Activated CD4-positive, alpha-beta memory T cell treated with anti-CD3 and anti-CD28 coated beads for 36 hours (primary cell): ENCODE measurements at regions of chr22 and their contacts with region 1.

Region 1: GRCh38 chr22:26483439-26484359 is at the starts of genes HPS4 and SRRD:
- DNase-seq: peak; percentile 94
- H3K4me3 Mint-ChIP-seq: peak within 1 kb of the TSS; percentile 96
- H3K27ac Mint-ChIP-seq: peak within 1 kb of the TSS; percentile 92
- H3K4me1 Mint-ChIP-seq: peaks cover 65% of the 10 kb centered on the region
- H3K27me3 Mint-ChIP-seq: no peaks in the 10 kb centered on the region
- total RNA-seq, gene HPS4: 41.7 to 44.3 TPM
- total RNA-seq, gene SRRD: 20.6 to 22.0 TPM

Region 2: DNA sequence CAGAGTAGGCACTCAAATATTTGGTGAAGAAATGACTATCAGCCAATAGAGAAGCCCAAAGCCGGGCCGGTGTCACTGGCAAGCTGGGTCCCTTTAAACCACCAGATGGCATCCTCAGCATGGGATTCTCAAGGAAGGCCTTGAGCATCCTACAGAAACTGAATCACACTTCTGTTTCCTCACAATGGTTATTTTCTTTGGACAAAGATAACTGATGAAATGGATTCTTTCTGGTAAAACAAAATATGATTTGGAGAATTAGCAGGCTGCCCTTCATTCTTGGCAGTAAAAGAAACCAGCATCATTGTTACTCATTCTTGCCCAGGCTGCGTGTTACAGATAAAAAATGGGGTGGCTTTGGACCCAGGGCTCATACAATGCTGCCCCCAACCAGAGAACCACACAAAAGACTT is 85.0 kb before region 1 on chr22:
- CTCF ChIA-PET with region 1: interaction called, 5 read pairs
- POLR2A ChIA-PET with region 1: no interaction called
- intact Hi-C with region 1: loop called (anchors 1 kb)
- DNase-seq: peak; percentile 77
- H3K4me3 Mint-ChIP-seq: no peak overlapping the region
- H3K27ac Mint-ChIP-seq: no peak overlapping the region
- H3K4me1 Mint-ChIP-seq: peaks cover 5% of the 10 kb centered on the region
- H3K27me3 Mint-ChIP-seq: no peaks in the 10 kb centered on the region

Region 3: GRCh38 chr22:26461188-26461810 is 22.4 kb before region 1 on chr22:
- CTCF ChIA-PET with region 1: interaction called, 10 read pairs
- POLR2A ChIA-PET with region 1: no interaction called
- intact Hi-C with region 1: no loop called
- DNase-seq: peak; percentile 42
- H3K4me3 Mint-ChIP-seq: no peak overlapping the region
- H3K27ac Mint-ChIP-seq: no peak overlapping the region
- H3K4me1 Mint-ChIP-seq: no peaks in the 10 kb centered on the region
- H3K27me3 Mint-ChIP-seq: no peaks in the 10 kb centered on the region

Region 4: DNA sequence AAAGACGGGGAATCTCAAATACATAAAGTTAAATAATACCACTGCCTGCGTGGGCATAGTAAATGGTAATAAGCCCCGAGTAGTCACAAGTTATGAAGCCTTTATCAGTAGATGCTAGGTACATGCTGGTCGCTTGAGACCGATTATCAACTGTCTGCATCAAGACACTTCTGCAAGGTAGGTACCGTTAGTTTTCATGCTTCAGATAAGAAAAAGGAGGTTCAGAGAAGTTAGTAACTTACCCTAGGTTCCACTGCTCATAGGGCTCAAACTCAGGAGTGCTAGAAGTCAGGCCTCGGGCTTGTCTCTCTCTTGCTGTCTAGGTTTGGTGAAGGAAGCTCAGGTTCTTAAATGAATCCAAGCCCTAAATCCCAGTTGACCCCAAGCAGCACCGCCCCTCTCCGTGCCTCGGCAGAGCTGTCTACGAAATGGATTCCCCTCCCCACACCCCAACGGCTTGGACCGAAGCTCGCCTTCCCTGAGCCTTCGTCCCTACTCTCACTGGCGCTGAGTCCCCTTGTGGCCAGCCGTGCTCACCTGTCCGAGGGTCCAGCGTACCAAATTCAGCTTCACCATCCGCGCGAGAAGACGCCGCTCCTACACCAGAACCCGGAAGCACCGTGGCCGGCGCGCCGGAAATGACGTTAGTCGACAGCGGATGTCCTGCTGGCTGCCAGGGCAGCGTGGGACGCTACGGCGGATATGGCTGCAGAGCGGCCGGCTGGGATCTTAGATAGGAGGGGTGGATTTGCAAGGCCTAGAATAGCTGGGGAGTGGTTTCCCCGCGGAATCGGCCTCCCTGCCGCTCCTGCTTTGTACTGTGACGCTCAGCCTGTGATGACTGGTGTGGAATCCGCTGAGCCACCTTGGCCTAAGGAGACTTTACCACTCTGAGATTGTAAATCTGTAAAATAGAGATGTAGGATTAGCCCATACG is 28.4 kb after region 1 on chr22 and contains the start of gene TFIP11:
- CTCF ChIA-PET with region 1: interaction called, 5 read pairs
- POLR2A ChIA-PET with region 1: interaction called, 3 read pairs
- intact Hi-C with region 1: loop called (anchors 1 kb)
- DNase-seq: peak; percentile 95
- H3K4me3 Mint-ChIP-seq: peak within 1 kb of the TSS; percentile 98
- H3K27ac Mint-ChIP-seq: peak within 1 kb of the TSS; percentile 88
- H3K4me1 Mint-ChIP-seq: peaks cover 37% of the 10 kb centered on the region
- H3K27me3 Mint-ChIP-seq: no peaks in the 10 kb centered on the region
- total RNA-seq, gene TFIP11: 41.1 to 43.0 TPM

Region 5: GRCh38 chr22:26658671-26659478 is 175.2 kb after region 1 on chr22:
- CTCF ChIA-PET with region 1: interaction called, 3 read pairs
- POLR2A ChIA-PET with region 1: interaction called, 9 read pairs
- intact Hi-C with region 1: loop called (anchors 2 kb)
- DNase-seq: peak; percentile 94
- H3K4me3 Mint-ChIP-seq: peak overlapping the region; percentile 95
- H3K27ac Mint-ChIP-seq: peak overlapping the region; percentile 88
- H3K4me1 Mint-ChIP-seq: peaks cover 34% of the 10 kb centered on the region
- H3K27me3 Mint-ChIP-seq: no peaks in the 10 kb centered on the region

Region 6: GRCh38 chr22:26672590-26673468 is 189.1 kb after region 1 on chr22:
- CTCF ChIA-PET with region 1: interaction called, 9 read pairs
- POLR2A ChIA-PET with region 1: interaction called, 26 read pairs
- intact Hi-C with region 1: loop called (anchors 1 kb)
- DNase-seq: peak; percentile 97
- H3K4me3 Mint-ChIP-seq: peak overlapping the region; percentile 94
- H3K27ac Mint-ChIP-seq: peak overlapping the region; percentile 100
- H3K4me1 Mint-ChIP-seq: peaks cover 67% of the 10 kb centered on the region
- H3K27me3 Mint-ChIP-seq: no peaks in the 10 kb centered on the region